IMR-90 (cell line): ENCODE measurements at regions of chr13 and their contacts with region 1.

Region 1: DNA sequence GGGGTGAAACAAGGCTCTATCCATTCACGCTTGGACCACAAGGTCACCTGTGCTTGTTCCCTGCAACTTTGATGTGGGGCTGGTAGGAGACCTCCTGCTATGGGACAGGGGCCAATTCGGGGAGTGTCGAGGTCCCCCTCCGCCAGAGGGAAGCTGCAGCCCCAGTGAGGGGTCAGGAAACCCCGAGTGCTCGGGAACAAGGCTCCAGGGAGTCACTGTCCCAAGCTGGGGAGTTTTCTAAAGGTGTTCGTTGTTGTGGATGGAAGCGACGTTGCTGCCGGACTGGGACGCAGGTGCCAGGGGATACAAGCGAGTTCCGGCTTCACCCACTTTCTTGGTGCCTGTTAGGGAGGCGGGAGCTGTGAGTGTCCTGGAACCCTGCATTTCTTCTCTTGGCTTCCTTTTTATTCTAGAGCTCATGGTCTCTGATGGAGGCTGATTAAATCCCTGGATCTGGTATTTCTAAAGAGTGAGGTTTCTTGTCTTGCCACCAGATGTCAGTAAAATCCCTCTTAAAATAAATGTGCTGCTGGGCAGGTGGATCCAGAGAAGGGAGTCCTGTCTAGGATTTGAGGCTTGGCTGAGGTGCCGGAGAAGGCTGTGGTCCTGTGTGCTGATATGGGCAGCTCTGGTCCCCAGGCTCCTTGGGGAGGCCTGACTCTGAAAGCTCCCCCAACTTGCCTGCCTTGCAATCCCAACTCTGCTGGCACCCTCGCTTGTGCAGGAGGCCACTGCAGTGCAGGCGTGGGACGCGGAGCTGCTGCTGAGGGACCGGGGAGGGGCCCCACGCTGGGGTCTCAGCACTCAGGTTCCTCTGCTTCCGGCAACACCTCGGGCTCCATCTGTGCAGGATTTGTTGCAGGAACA is 153.9 kb downstream of the TEX29 start:
- DNase-seq: peak; percentile 35
- ATAC-seq: peak; percentile 92
- H3K4me3 ChIP-seq: no peak overlapping the region
- H3K27ac ChIP-seq: no peak overlapping the region
- H3K4me1 ChIP-seq: no peaks in the 10 kb centered on the region
- H3K27me3 ChIP-seq: no peaks in the 10 kb centered on the region
- CTCF ChIP-seq: peak; percentile 57
- POLR2A ChIP-seq: no peak
- RAD21 ChIP-seq: peak; percentile 57

Region 2: DNA sequence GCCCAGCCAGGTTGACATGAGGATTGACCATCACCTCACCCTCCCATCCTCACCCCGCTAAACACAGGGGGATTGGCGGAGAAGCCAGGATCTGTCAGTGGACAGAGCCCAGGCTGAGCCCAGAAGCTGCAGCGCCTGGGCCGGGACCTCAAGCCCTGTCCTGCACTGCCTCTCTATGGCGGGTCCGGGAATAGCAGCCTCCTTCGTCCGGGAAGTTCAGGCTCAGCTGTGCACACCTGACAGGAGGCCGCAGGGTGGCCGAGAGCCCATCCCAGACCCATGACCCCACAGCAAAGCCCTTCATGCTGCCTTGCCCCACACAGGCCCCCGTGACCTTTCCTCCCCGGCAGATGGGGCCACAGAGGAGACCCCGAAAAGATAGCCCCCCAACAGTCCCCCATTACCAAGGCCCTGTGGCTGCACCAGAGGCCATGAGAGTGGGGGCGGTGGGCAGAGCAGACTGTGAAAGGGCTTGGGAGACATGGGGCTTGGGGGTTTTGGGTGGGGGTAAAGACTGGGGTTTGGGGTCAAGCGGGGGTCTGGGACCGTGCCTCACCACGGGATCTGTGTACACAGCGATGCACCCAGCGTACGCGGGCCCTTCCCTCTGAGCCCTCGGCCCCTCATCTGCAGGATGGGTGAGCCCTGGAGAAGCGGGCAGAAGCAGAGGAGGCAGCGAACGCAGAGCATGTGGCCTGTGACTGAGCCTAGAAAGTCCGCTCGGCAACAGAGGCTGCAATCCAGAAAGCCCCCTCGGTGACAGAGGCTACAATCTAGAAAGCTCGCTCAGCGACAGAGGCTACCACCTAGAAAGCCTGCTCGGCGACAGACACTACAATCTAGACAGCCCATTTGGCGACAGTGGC is 969.9 kb after region 1 on chr13:
- CTCF ChIA-PET with region 1: interaction called, 11 read pairs
- POLR2A ChIA-PET with region 1: no interaction called
- dilution Hi-C with region 1: no loop called
- in situ Hi-C with region 1: loop called (anchors 5 kb)
- intact Hi-C with region 1: loop called (anchors 1 kb)
- DNase-seq: peak; percentile 42
- ATAC-seq: peak; percentile 95
- H3K4me3 ChIP-seq: no peak overlapping the region
- H3K27ac ChIP-seq: no peak overlapping the region
- H3K4me1 ChIP-seq: no peaks in the 10 kb centered on the region
- H3K27me3 ChIP-seq: peaks cover 9% of the 10 kb centered on the region
- CTCF ChIP-seq: peak; percentile 81
- POLR2A ChIP-seq: no peak
- RAD21 ChIP-seq: peak; percentile 87

Region 3: GRCh38 chr13:112510002-112510780 is 1035.8 kb after region 1 on chr13:
- CTCF ChIA-PET with region 1: no interaction called
- POLR2A ChIA-PET with region 1: no interaction called
- dilution Hi-C with region 1: no loop called
- in situ Hi-C with region 1: no loop called
- intact Hi-C with region 1: loop called (anchors 2 kb)
- DNase-seq: peak; percentile 71
- ATAC-seq: peak; percentile 92
- H3K4me3 ChIP-seq: no peak overlapping the region
- H3K27ac ChIP-seq: no peak overlapping the region
- H3K4me1 ChIP-seq: no peaks in the 10 kb centered on the region
- H3K27me3 ChIP-seq: no peaks in the 10 kb centered on the region
- CTCF ChIP-seq: peak; percentile 55
- POLR2A ChIP-seq: no peak
- RAD21 ChIP-seq: peak; percentile 56